ENCODE measurements at regions of chr17 and their contacts with region 1.

Region 1: GRCh38 chr17:49987681-49988441 is 7.2 kb downstream of the DLX3 start:
- DNase-seq: no peak
- H3K4me3 ChIP-seq: no peak overlapping the region
- H3K27me3 ChIP-seq: peaks cover 18% of the 10 kb centered on the region
- CTCF ChIP-seq: no peak

Region 2: DNA sequence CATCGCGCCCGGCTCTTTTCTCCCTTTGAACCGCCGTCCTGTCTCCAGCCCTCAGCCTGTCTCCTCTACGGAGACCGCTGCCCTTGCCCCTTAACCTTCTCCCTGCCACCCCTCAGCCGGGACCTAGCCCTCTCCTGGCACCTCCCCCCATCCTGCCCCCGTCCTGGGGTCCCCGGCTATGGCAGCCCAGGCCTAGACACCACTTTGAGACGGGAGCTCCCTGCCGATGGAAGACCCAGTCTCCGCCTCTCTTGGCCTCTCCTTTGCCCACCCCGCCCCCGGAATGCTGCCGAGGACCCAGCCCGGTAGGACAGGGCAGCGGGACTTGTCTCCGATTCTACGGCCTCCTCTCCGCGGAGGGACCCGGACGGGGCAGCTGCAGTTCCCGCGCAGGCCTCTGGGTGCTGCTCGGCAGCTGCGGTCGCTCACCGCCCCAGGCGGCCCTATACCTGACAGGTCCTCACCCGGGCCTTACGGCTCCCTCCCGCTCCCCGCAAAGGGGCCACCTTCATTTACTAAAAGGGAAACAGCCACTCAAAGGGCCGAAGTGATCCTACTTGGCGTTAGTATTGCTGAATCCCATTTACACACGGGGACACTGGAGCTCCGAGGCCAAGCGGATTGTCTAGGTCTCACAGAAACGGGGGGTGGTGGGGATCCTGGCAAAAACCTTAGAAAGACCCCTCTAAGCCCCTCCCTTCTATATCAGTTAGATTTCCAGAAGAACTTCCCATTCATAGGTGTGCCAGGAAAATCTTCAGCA is 107.4 kb before region 1 on chr17:
- CTCF ChIA-PET with region 1: interaction called, 464 read pairs
- POLR2A ChIA-PET with region 1: no interaction called
- DNase-seq: no peak
- H3K4me3 ChIP-seq: no peak overlapping the region
- H3K27me3 ChIP-seq: peaks cover 35% of the 10 kb centered on the region
- CTCF ChIP-seq: peak; percentile 96

Measured in BJ (cell line).